ENCODE measurements at regions of chr5 and their contacts with region 1.

Region 1: DNA sequence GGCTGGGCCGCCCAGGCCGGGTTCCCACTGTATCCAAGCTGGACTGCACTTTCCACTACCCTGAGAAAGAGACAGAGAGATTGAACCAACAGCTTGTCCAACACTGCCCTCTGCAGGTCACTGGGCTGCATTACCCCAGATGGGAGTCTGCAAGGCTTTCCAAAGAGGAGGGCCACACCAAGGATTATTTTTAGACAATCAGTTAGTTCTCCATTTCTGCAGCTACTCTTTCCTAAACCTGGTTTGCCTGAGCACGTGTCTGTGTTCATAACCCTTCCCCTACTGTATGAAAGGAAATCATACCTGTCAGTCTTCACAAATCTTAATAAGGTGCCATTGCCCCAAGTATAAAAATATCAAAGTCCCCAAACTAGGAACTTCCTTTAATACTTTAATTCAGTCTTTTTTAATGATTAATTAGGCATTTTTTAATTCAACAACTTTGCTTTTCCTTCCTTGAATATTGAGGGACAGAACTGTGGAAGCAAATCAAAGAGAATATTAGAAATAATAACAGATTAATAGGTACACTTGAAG is 13.4 kb upstream of the FGF1 start:
- DNase-seq: peak; percentile 92
- ATAC-seq: peak; percentile 99
- H3K4me3 ChIP-seq: no peak overlapping the region
- H3K27ac ChIP-seq: no peak overlapping the region
- H3K4me1 ChIP-seq: peaks cover 15% of the 10 kb centered on the region
- H3K27me3 ChIP-seq: no peaks in the 10 kb centered on the region
- CTCF ChIP-seq: peak; percentile 88

Region 2: GRCh38 chr5:142611154-142611553 is 88.1 kb before region 1 on chr5:
- CTCF ChIA-PET with region 1: no interaction called
- POLR2A ChIA-PET with region 1: no interaction called
- intact Hi-C with region 1: loop called (anchors 1 kb)
- DNase-seq: peak; percentile 68
- ATAC-seq: peak; percentile 93
- H3K4me3 ChIP-seq: no peak overlapping the region
- H3K27ac ChIP-seq: no peak overlapping the region
- H3K4me1 ChIP-seq: peaks cover 8% of the 10 kb centered on the region; the same call in 1 of the 2 replicates
- H3K27me3 ChIP-seq: no peaks in the 10 kb centered on the region
- CTCF ChIP-seq: peak; percentile 68

Measured in PC-3 (cell line).